Caco-2 (cell line): ENCODE measurements at regions of chr3 and their contacts with region 1.

Region 1: GRCh38 chr3:111691293-111691909 is 96.3 kb upstream of the ZBED2 start:
- DNase-seq: peak in 1 of 2 experiments; percentile 36
- H3K4me3 ChIP-seq: no peak overlapping the region
- H3K4me3 Mint-ChIP-seq: no peak overlapping the region
- H3K27ac Mint-ChIP-seq: no peak overlapping the region
- H3K4me1 ChIP-seq: peaks cover 38% of the 10 kb centered on the region
- H3K4me1 Mint-ChIP-seq: peaks cover 33% of the 10 kb centered on the region
- H3K27me3 ChIP-seq: no peaks in the 10 kb centered on the region
- H3K27me3 Mint-ChIP-seq: no peaks in the 10 kb centered on the region
- CTCF ChIP-seq: peak; percentile 45 to 62

Region 2: DNA sequence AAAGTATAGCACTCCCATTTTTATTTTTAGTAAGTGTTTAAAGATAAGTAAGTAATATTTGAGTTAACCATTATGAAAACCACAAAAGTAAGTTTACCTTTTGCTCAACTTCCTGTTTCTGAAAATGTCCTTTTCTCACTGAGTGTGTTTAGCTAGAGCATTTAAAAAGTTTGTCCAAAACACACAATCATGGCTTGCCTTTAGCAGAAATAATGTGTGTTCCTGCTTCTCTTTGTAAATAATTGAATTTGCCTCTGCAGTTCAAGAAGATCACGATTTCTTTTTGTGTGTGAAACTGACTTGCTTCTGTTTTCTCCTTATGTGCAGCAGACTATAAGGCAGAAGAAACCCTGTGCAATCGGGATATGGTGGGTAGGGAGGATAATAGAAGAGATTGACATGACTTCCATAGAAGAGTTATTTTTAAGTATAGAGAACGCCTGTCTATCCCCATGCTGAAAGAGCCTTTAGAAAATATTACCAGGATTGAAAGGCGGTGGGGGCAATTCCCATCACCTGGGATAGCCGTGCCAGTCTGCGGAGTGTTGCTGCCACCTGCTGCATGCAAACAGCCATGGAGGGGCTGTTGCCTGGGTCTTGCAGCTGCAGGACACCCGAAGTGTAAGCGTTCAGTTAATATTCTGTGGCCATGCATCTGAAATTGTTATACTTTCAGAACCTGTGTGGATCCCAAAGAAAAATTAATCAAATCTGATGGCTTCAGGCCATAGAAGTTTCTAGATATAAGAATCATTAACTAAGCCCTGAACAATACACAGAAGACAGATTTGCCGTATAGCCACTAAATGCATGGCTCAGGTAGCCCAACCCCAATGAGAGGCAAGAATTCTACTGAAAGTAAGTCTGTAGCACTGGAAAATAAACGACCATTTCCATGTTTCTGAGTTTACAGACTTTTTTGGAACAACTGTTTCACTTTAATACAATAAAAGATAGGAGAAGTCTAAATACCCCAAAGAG is 151.8 kb before region 1 on chr3:
- CTCF ChIA-PET with region 1: no interaction called
- POLR2A ChIA-PET with region 1: no interaction called
- intact Hi-C with region 1: no loop called
- DNase-seq: peak; percentile 72 to 73
- H3K4me3 ChIP-seq: no peak overlapping the region
- H3K4me3 Mint-ChIP-seq: no peak overlapping the region
- H3K27ac Mint-ChIP-seq: no peak overlapping the region
- H3K4me1 ChIP-seq: peaks cover 14% of the 10 kb centered on the region; the same call in 1 of the 2 replicates
- H3K4me1 Mint-ChIP-seq: peaks cover 11% of the 10 kb centered on the region
- H3K27me3 ChIP-seq: no peaks in the 10 kb centered on the region
- H3K27me3 Mint-ChIP-seq: no peaks in the 10 kb centered on the region
- CTCF ChIP-seq: peak; percentile 80 to 85

Region 3: GRCh38 chr3:111650378-111651275 is 40.8 kb before region 1 on chr3:
- CTCF ChIA-PET with region 1: no interaction called
- POLR2A ChIA-PET with region 1: no interaction called
- intact Hi-C with region 1: no loop called
- DNase-seq: no peak
- H3K4me3 ChIP-seq: no peak overlapping the region
- H3K4me3 Mint-ChIP-seq: no peak overlapping the region
- H3K27ac Mint-ChIP-seq: no peak overlapping the region
- H3K4me1 ChIP-seq: 0 out of 2 replicates have a peak, but pooled peaks cover 10% of the 10 kb centered on the region
- H3K4me1 Mint-ChIP-seq: no peaks in the 10 kb centered on the region
- H3K27me3 ChIP-seq: no peaks in the 10 kb centered on the region
- H3K27me3 Mint-ChIP-seq: no peaks in the 10 kb centered on the region
- CTCF ChIP-seq: no peak

Region 4: GRCh38 chr3:111668912-111669488 is 22.4 kb before region 1 on chr3:
- CTCF ChIA-PET with region 1: interaction called, 95 read pairs
- POLR2A ChIA-PET with region 1: no interaction called
- intact Hi-C with region 1: loop called (anchors 1 kb)
- DNase-seq: peak in 1 of 2 experiments; percentile 30
- H3K4me3 ChIP-seq: no peak overlapping the region
- H3K4me3 Mint-ChIP-seq: no peak overlapping the region
- H3K27ac Mint-ChIP-seq: no peak overlapping the region
- H3K4me1 ChIP-seq: peaks cover 4% of the 10 kb centered on the region; the same call in 1 of the 2 replicates
- H3K4me1 Mint-ChIP-seq: peaks cover 18% of the 10 kb centered on the region
- H3K27me3 ChIP-seq: no peaks in the 10 kb centered on the region
- H3K27me3 Mint-ChIP-seq: no peaks in the 10 kb centered on the region
- CTCF ChIP-seq: peak; percentile 46 to 70

Region 5: DNA sequence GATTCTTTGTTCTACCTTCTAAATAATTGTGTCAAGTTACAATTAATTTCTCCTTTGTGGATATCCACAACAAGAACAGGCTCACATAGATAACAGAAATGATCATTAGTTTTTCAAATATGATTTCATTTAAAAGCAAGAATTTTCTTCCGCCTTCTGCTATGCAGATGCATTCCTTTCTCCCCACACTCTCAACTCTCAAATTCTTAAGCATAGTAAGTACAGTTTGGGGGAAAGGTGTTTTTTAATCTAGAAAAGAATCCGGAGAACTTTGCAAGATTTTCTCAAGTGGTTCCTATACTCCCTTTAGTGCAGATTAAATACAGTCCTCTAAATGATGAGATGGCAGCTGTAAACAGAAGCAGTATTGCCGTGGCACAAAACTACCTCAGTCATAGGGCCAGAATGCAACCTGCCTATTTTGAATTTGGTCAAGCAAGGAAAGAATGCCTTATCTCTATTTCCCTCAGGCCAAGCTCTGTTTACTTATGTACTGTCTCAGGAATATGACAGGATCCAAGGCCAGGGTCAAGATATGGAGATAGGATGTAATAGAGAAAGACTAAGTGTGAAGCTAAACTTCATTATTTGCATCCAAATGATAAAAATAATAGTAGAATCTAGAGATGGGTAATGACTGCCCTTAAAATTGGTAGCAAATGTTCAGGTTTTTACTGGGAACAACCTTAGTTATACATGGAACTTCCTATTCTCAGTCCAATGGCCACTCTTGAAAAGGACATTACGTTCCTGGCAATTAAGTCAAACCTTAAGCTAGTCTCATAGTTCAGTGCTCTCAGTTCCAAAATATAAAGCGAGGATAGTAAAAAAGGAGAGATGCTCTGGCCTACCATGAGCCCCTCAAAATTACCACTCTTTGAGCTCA is 90.4 kb after region 1 on chr3:
- CTCF ChIA-PET with region 1: no interaction called
- POLR2A ChIA-PET with region 1: no interaction called
- intact Hi-C with region 1: no loop called
- DNase-seq: no peak
- H3K4me3 ChIP-seq: no peak overlapping the region
- H3K4me3 Mint-ChIP-seq: no peak overlapping the region
- H3K27ac Mint-ChIP-seq: no peak overlapping the region
- H3K4me1 ChIP-seq: peaks cover 53% of the 10 kb centered on the region
- H3K4me1 Mint-ChIP-seq: peaks cover 28% of the 10 kb centered on the region
- H3K27me3 ChIP-seq: no peaks in the 10 kb centered on the region
- H3K27me3 Mint-ChIP-seq: no peaks in the 10 kb centered on the region
- CTCF ChIP-seq: no peak

Region 6: GRCh38 chr3:113051302-113051711 is 1359.9 kb after region 1 on chr3:
- CTCF ChIA-PET with region 1: no interaction called
- POLR2A ChIA-PET with region 1: no interaction called
- intact Hi-C with region 1: no loop called
- DNase-seq: peak; percentile 72 to 84
- H3K4me3 ChIP-seq: no peak overlapping the region
- H3K4me3 Mint-ChIP-seq: no peak overlapping the region
- H3K27ac Mint-ChIP-seq: no peak overlapping the region
- H3K4me1 ChIP-seq: no peaks in the 10 kb centered on the region
- H3K4me1 Mint-ChIP-seq: no peaks in the 10 kb centered on the region
- H3K27me3 ChIP-seq: no peaks in the 10 kb centered on the region
- H3K27me3 Mint-ChIP-seq: no peaks in the 10 kb centered on the region
- CTCF ChIP-seq: peak; percentile 78 to 91